SK-N-SH (cell line): ENCODE measurements at regions of chr5 and their contacts with region 1.

Region 1: GRCh38 chr5:74673011-74673790 is 11.8 kb upstream of the HEXB start:
- DNase-seq: peak; percentile 44
- H3K4me3 ChIP-seq: no peak overlapping the region; a peak in 1 of 4 replicates
- H3K27ac ChIP-seq: no peak overlapping the region; a peak in 1 of 4 replicates
- H3K4me1 ChIP-seq: peaks cover 0 to 19% of the 10 kb centered on the region in 2 experiments; a peak in 2 of 4 replicates
- H3K27me3 ChIP-seq: no peaks in the 10 kb centered on the region
- CTCF ChIP-seq: peak; percentile 67
- EP300 ChIP-seq: no peak
- RAD21 ChIP-seq: peak; percentile 77

Region 2: GRCh38 chr5:74167206-74167929 is 505.8 kb before region 1 on chr5:
- CTCF ChIA-PET with region 1: no interaction called
- POLR2A ChIA-PET with region 1: no interaction called
- DNase-seq: no peak
- H3K4me3 ChIP-seq: 0 out of 4 replicates have a peak overlapping the region, but pooled peaks of 1 of the 2 experiments have one; percentile 5
- H3K27ac ChIP-seq: peak overlapping the region; percentile 47 to 96; a peak in 3 of 4 replicates
- H3K4me1 ChIP-seq: peaks cover 11 to 14% of the 10 kb centered on the region in 2 experiments; a peak in 3 of 4 replicates
- H3K27me3 ChIP-seq: no peaks in the 10 kb centered on the region
- CTCF ChIP-seq: no peak
- EP300 ChIP-seq: peak in 1 of 2 experiments; percentile 87; a peak in 2 of 4 replicates
- RAD21 ChIP-seq: no peak

Region 3: GRCh38 chr5:74660140-74660539 is 13.1 kb before region 1 on chr5:
- CTCF ChIA-PET with region 1: interaction called, 12 read pairs
- POLR2A ChIA-PET with region 1: no interaction called
- DNase-seq: no peak
- H3K4me3 ChIP-seq: no peak overlapping the region
- H3K27ac ChIP-seq: peak overlapping the region in 1 of 2 experiments; percentile 33; a peak in 1 of 4 replicates
- H3K4me1 ChIP-seq: no peaks in the 10 kb centered on the region
- H3K27me3 ChIP-seq: no peaks in the 10 kb centered on the region
- CTCF ChIP-seq: no peak
- EP300 ChIP-seq: no peak
- RAD21 ChIP-seq: no peak

Region 4: GRCh38 chr5:74684900-74685851 is 12.0 kb after region 1 on chr5 and contains the start of gene HEXB:
- CTCF ChIA-PET with region 1: interaction called, 15 read pairs
- POLR2A ChIA-PET with region 1: no interaction called
- DNase-seq: peak; percentile 95
- H3K4me3 ChIP-seq: peak within 1 kb of the TSS; percentile 76 to 82
- H3K27ac ChIP-seq: peak within 1 kb of the TSS in 1 of 2 experiments; percentile 20; a peak in 1 of 4 replicates
- H3K4me1 ChIP-seq: peaks cover 0 to 14% of the 10 kb centered on the region in 2 experiments; a peak in 1 of 4 replicates
- H3K27me3 ChIP-seq: no peaks in the 10 kb centered on the region
- CTCF ChIP-seq: no peak
- EP300 ChIP-seq: no peak
- RAD21 ChIP-seq: no peak
- polyA plus RNA-seq, gene HEXB: 75.8 and 80.0 TPM in 2 replicates

Region 5: DNA sequence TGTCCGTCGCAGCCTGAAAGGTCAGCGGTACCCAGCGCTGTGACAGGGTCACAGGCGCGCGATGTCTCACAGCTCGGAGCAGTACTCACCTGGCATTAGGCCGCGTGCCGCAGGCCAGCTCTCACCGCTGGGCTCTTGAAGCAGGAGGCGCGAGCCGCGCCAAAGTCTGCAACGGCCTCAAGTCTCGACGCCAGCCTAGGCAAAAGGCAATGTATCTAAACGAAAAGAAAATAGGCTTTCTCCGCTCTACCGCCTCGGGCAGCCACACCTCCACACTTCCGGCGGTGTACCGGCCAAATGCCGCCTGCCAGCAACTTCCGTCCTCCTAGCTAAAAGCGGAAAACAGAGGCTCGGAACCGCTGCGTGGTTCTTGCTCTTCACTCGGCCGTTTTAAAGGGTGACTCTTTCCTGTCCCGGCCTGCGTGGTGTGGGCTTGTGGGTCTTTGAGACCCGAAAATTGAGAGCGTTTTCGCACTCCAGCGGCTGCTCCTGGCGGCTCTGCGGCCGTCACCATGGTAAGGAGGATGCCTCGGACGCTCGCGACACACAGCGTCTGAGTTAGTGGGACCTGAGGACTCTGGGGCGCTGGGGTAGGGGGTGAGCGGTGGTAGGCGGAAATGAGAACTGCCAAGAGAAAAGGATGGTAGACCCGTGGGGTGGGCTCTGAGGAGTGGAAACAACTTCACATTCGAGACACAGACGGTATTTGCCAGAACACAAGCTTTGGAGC is 93.8 kb after region 1 on chr5 and contains the starts of genes GFM2 and NSA2:
- CTCF ChIA-PET with region 1: interaction called, 14 read pairs
- POLR2A ChIA-PET with region 1: no interaction called
- DNase-seq: peak; percentile 80
- H3K4me3 ChIP-seq: peak within 1 kb of the TSS; percentile 98 to 100
- H3K27ac ChIP-seq: peak within 1 kb of the TSS; percentile 67 to 89
- H3K4me1 ChIP-seq: peaks cover 17 to 27% of the 10 kb centered on the region in 2 experiments; a peak in 3 of 4 replicates
- H3K27me3 ChIP-seq: no peaks in the 10 kb centered on the region
- CTCF ChIP-seq: no peak
- EP300 ChIP-seq: peak in 1 of 2 experiments; percentile 14; a peak in 1 of 4 replicates
- RAD21 ChIP-seq: no peak
- polyA plus RNA-seq, gene GFM2: 29.5 and 37.3 TPM in 2 replicates
- polyA plus RNA-seq, gene NSA2: 70.7 and 81.0 TPM in 2 replicates

Region 6: DNA sequence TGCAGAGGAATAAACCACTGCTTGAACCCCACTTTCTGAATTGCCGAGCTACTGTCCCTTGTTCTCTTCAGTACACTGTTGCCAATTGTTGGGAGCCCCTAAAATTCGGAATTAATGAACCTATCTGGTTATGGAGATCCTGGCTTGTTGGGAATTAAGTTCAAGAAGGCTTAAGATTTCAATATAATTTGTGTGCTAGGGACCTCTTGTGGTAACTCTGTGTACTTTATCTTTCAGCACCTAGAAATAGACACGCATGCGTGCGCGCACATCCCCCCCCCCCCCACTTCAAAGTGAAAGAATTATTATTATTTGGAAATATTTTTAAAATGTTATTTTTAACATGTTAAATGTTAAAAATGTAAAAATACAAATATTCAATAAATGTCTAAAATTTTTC is 246.3 kb after region 1 on chr5:
- CTCF ChIA-PET with region 1: interaction called, 27 read pairs
- POLR2A ChIA-PET with region 1: no interaction called
- DNase-seq: peak; percentile 69
- H3K4me3 ChIP-seq: no peak overlapping the region
- H3K27ac ChIP-seq: no peak overlapping the region
- H3K4me1 ChIP-seq: no peaks in the 10 kb centered on the region
- H3K27me3 ChIP-seq: no peaks in the 10 kb centered on the region
- CTCF ChIP-seq: peak; percentile 69
- EP300 ChIP-seq: no peak
- RAD21 ChIP-seq: peak; percentile 80